ENCODE measurements at regions of chr15 and their contacts with region 1.

Region 1: GRCh38 chr15:84748274-84749110 is at the start of gene ZNF592:
- DNase-seq: peak; percentile 67
- H3K4me3 ChIP-seq: peak within 1 kb of the TSS; percentile 62 to 90 (median 86)
- H3K27ac ChIP-seq: peak within 1 kb of the TSS; percentile 67
- H3K4me1 ChIP-seq: peaks cover 30% of the 10 kb centered on the region
- H3K27me3 ChIP-seq: no peaks in the 10 kb centered on the region
- CTCF ChIP-seq: peak in 1 of 2 donors; percentile 23
- POLR2A ChIP-seq: peak; percentile 82
- total RNA-seq, gene ZNF592: 21.1 and 22.3 TPM in 2 replicates

Region 2: DNA sequence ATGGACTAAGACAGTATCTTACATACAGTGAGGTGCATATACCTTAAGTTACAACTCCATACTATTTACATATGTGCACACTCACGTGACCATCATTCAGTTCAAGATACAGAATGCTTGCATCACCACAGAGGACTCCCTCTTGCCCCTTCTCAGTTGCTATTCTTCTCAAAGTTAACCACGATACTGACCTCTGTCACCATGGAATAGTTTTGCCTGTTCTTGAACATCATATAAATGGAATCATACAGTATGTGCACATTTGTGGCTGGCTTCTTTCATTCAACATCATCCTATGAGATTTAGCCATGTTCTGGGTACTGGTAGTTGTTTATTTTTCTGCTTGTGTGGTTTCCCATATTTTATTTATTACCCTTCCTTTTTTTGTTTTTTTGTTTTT is 158.1 kb before region 1 on chr15:
- CTCF ChIA-PET with region 1: no interaction called
- POLR2A ChIA-PET with region 1: no interaction called
- dilution Hi-C with region 1: no loop called
- intact Hi-C with region 1: no loop called
- DNase-seq: no peak
- H3K4me3 ChIP-seq: no peak overlapping the region
- H3K27ac ChIP-seq: no peak overlapping the region
- H3K4me1 ChIP-seq: peaks cover 5% of the 10 kb centered on the region
- H3K27me3 ChIP-seq: peaks cover 0 to 9% of the 10 kb centered on the region in 2 experiments
- CTCF ChIP-seq: no peak
- POLR2A ChIP-seq: no peak

Region 3: DNA sequence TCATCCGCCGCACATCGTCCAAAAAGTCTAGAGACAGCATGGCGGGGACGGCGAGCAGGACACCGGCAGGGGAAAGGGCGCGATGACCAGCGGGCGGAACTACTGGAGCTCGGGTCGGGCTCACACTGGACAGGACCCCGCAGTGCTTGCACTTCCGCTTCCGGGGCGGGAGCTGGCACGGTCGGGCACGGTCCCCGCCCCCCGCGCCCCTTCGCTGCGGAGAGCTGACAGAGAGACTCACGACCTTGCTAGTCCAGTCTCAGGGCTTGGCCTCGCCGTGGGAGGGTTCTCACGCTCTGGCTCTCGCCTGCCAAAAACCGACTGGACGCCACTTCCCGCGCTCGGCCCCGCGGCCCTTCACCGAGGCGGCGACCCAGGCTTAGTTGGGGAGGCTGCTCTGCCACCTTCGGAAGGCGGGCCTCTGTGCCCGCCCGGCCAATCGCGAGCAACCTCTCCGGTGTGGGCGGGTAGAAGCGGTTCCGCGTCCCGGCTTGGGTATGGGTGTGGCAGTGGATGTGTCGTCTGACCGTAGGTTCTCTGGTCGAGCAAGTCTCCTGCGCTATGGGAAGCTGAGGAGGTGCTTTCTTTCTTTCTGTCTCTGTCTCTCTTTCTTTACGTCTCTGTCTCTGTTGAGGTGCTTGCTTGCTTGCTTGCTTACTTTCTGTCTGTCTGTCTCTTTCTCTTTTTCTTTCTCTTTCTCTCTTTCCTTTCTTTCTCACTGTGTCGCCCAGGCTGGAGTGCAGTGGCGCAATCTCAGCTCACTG is 32.3 kb before region 1 on chr15 and contains the start of gene SEC11A:
- CTCF ChIA-PET with region 1: interaction called, 4 read pairs
- POLR2A ChIA-PET with region 1: interaction called, 4 read pairs
- dilution Hi-C with region 1: no loop called
- intact Hi-C with region 1: loop called (anchors 1 kb)
- DNase-seq: peak; percentile 97
- H3K4me3 ChIP-seq: peak within 1 kb of the TSS; percentile 55 to 95 (median 85)
- H3K27ac ChIP-seq: peak within 1 kb of the TSS; percentile 56
- H3K4me1 ChIP-seq: peaks cover 22% of the 10 kb centered on the region
- H3K27me3 ChIP-seq: no peaks in the 10 kb centered on the region
- CTCF ChIP-seq: no peak
- POLR2A ChIP-seq: peak; percentile 97
- total RNA-seq, gene SEC11A: 192 and 204 TPM in 2 replicates

Region 4: GRCh38 chr15:84764585-84764984 is 16.1 kb after region 1 on chr15:
- CTCF ChIA-PET with region 1: interaction called, 3 read pairs
- POLR2A ChIA-PET with region 1: interaction called, 5 read pairs
- dilution Hi-C with region 1: no loop called
- intact Hi-C with region 1: loop called (anchors 2 kb)
- DNase-seq: no peak
- H3K4me3 ChIP-seq: no peak overlapping the region
- H3K27ac ChIP-seq: peak overlapping the region; percentile 58
- H3K4me1 ChIP-seq: peaks cover 22% of the 10 kb centered on the region
- H3K27me3 ChIP-seq: no peaks in the 10 kb centered on the region
- CTCF ChIP-seq: no peak
- POLR2A ChIP-seq: no peak

Region 5: GRCh38 chr15:84791763-84792162 is 43.3 kb after region 1 on chr15:
- CTCF ChIA-PET with region 1: no interaction called
- POLR2A ChIA-PET with region 1: no interaction called
- dilution Hi-C with region 1: no loop called
- intact Hi-C with region 1: no loop called
- DNase-seq: no peak
- H3K4me3 ChIP-seq: no peak overlapping the region
- H3K27ac ChIP-seq: no peak overlapping the region
- H3K4me1 ChIP-seq: no peaks in the 10 kb centered on the region
- H3K27me3 ChIP-seq: no peaks in the 10 kb centered on the region
- CTCF ChIP-seq: no peak
- POLR2A ChIP-seq: no peak

Region 6: DNA sequence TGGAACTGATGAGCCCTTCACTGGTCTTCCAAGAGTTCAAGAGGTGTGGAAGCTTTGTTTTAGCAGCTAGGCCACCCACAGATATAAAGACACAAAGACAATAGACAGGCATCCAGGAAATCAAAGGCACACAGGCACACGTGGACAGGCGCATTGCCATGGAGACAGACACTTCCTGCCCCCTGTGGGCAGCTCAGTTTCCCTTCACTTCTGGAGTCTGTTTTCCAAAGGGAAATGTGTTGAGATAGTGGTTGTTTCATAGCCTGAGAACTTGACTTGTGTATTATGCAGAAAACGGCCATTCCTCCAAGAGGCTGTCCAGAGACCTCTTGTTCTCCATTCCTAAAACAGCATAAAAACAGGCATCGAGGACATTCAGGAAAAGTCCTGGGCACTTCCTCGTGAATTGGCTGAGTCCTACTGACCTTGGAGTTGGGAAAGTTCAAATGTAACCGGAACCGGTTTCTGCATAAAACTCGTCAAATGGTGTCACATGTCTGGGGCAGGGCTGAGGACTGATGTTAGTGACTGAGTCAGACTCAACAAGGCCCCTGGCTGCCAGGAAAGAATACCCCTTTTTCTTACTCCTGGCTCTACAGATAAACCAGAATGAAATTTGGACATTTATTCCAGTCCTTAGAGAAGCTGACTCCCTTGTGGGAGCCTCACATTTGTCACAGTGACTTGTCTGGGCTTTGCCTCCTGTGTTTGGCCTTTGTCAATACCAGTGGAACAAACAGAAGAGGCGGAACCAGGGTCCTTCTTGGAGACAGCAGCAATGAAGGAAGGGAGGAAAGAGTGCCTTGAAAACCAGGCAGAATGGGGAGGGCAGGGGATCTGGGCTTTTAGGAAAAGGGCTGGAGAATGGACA is 70.0 kb after region 1 on chr15:
- CTCF ChIA-PET with region 1: interaction called, 3 read pairs
- POLR2A ChIA-PET with region 1: no interaction called
- dilution Hi-C with region 1: no loop called
- intact Hi-C with region 1: loop called (anchors 1 kb)
- DNase-seq: peak; percentile 91
- H3K4me3 ChIP-seq: peak overlapping the region in 2 of 3 experiments; percentile 57 to 58
- H3K27ac ChIP-seq: peak overlapping the region; percentile 88
- H3K4me1 ChIP-seq: peaks cover 42% of the 10 kb centered on the region
- H3K27me3 ChIP-seq: no peaks in the 10 kb centered on the region
- CTCF ChIP-seq: peak in 1 of 2 donors; percentile 2
- POLR2A ChIP-seq: peak; percentile 71